ENCODE measurements at regions of chr7 and their contacts with region 1.

Region 1: GRCh38 chr7:120987683-120988590 is 574 bp upstream of the CPED1 start:
- DNase-seq: peak; percentile 81
- H3K4me3 Mint-ChIP-seq: peak overlapping the region; percentile 78
- H3K27ac Mint-ChIP-seq: no peak overlapping the region
- H3K4me1 Mint-ChIP-seq: peaks cover 21% of the 10 kb centered on the region
- H3K27me3 Mint-ChIP-seq: peaks cover 41% of the 10 kb centered on the region

Region 2: GRCh38 chr7:120805636-120806388 is 182.1 kb before region 1 on chr7:
- intact Hi-C with region 1: loop called (anchors 5 kb)
- DNase-seq: peak; percentile 18
- H3K4me3 Mint-ChIP-seq: no peak overlapping the region
- H3K27ac Mint-ChIP-seq: no peak overlapping the region
- H3K4me1 Mint-ChIP-seq: no peaks in the 10 kb centered on the region
- H3K27me3 Mint-ChIP-seq: peaks cover 3% of the 10 kb centered on the region

Region 3: DNA sequence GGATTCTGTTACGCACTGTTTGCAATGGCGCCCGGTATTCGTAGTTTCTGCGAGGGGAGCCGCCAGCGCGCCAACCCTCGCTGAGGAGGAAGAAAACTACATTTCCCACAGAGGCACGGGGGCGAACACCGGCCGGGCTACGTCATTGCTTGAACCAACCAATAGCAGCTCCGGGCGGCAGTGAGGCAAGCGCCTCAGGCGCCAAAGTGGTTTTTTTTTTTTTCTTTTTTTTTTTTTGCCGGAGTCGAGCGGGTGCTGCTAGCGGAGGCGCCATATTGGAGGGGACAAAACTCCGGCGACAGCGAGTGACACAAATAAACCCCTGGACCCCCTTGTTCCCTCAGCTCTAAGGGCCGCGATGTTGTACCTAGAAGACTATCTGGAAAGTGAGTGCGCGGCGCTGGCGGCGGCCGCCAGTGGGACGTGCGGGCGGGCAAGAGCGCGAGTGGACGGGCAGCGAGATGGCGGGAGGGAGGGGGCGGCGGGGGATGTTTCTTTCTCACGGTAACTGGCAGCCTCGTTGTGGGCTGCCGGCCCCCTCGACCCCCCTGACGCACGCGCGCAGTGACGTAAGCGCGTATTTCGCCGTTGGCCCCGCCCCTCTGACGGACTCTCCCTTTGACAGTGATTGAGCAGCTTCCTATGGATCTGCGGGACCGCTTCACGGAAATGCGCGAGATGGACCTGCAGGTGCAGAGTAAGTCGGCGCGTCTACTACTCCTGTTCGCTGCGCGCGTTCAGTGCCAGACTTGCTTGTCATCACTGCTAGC is 37.2 kb before region 1 on chr7 and contains the start of gene ING3:
- intact Hi-C with region 1: loop called (anchors 1 kb)
- DNase-seq: peak; percentile 97
- H3K4me3 Mint-ChIP-seq: peak within 1 kb of the TSS; percentile 91
- H3K27ac Mint-ChIP-seq: peak within 1 kb of the TSS; percentile 97
- H3K4me1 Mint-ChIP-seq: peaks cover 24% of the 10 kb centered on the region
- H3K27me3 Mint-ChIP-seq: peaks cover 4% of the 10 kb centered on the region
- total RNA-seq, gene ING3: 22.6 and 22.9 TPM in 2 replicates

Region 4: DNA sequence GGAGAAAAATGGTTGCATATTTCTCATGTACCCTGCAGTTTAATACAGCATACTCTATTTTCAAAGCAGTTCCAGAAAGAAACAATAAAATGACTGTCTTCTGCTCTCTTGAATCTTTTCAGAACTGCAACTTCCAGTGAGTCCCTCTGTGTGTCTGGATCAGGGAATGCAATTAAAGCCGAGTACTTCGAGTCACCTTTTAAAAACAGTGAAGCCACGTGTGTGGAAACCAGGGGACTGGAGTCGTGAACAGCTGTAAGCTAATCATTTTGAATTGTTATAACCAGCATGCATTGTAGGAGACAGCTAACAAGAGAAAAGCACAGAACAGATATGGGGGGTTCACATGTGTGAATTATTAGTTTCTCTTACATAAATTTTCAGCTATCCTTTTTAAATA is 109.6 kb after region 1 on chr7:
- intact Hi-C with region 1: no loop called
- DNase-seq: no peak
- H3K4me3 Mint-ChIP-seq: no peak overlapping the region
- H3K27ac Mint-ChIP-seq: no peak overlapping the region
- H3K4me1 Mint-ChIP-seq: no peaks in the 10 kb centered on the region
- H3K27me3 Mint-ChIP-seq: peaks cover 19% of the 10 kb centered on the region

Region 5: DNA sequence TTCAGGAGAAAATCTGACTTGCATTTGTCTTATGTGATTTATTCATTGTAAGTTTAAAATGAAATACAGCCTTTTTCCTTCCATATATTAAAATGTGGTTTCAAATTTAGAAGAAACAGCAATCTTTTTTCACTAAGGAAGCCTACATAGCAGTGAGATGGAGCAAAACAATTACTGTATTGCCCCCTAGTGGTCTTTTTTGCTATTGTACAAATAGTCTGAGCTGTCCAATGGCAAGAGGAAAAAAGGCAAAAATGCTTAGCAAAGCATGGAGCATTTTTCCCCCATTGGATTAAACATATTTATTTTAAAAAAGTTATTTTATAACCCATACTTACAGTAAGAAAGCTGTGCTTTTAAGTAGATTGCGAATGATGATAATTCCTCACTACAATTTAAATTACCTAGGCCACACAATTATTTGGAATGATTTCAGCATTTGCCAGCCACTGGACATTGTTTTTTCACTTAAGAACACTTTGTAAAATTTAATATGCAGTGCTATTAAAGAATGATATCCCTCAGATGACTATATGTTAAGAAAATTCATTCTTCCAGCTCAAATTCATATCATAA is 120.1 kb after region 1 on chr7:
- intact Hi-C with region 1: loop called (anchors 1 kb)
- DNase-seq: no peak
- H3K4me3 Mint-ChIP-seq: no peak overlapping the region
- H3K27ac Mint-ChIP-seq: no peak overlapping the region
- H3K4me1 Mint-ChIP-seq: no peaks in the 10 kb centered on the region
- H3K27me3 Mint-ChIP-seq: peaks cover 15% of the 10 kb centered on the region

Region 6: GRCh38 chr7:121994625-121995410 is 1006.9 kb after region 1 on chr7:
- intact Hi-C with region 1: loop called (anchors 10 kb)
- DNase-seq: no peak
- H3K4me3 Mint-ChIP-seq: no peak overlapping the region
- H3K27ac Mint-ChIP-seq: no peak overlapping the region
- H3K4me1 Mint-ChIP-seq: no peaks in the 10 kb centered on the region
- H3K27me3 Mint-ChIP-seq: no peaks in the 10 kb centered on the region

Measured in activated T-helper 2 cell treated with anti-CD3 and anti-CD28 coated beads, Interferon-gamma antibody, Interleukin-2, Interleukin-4, amounts not matched to agents 10 μg/mL and 5 μg/mL and 100 μg/mL, durations not matched to agents 14 hours and 24 hours and 36 hours (primary cell).